CD8-positive, alpha-beta T cell (primary cell): ENCODE measurements at regions of chr15 and their contacts with region 1.

Region 1: GRCh38 chr15:75201609-75202250 is at the start of gene C15orf39:
- DNase-seq: peak; percentile 50 to 88 (median 72)
- ATAC-seq: peak; percentile 56
- H3K4me3 ChIP-seq: peak within 1 kb of the TSS; percentile 83 to 88
- H3K4me3 Mint-ChIP-seq: peak within 1 kb of the TSS; percentile 93
- H3K27ac ChIP-seq: peak within 1 kb of the TSS; percentile 82 to 85
- H3K27ac Mint-ChIP-seq: peak within 1 kb of the TSS; percentile 94
- H3K4me1 ChIP-seq: peaks cover 23% of the 10 kb centered on the region
- H3K4me1 Mint-ChIP-seq: peaks cover 47% of the 10 kb centered on the region
- H3K27me3 ChIP-seq: no peaks in the 10 kb centered on the region
- H3K27me3 Mint-ChIP-seq: no peaks in the 10 kb centered on the region
- CTCF ChIP-seq: peak; percentile 92
- total RNA-seq, gene C15orf39: 36.6 to 37.6 TPM

Region 2: GRCh38 chr15:74373731-74374647 is 827.7 kb before region 1 on chr15:
- CTCF ChIA-PET with region 1: no interaction called
- POLR2A ChIA-PET with region 1: interaction called, 3 read pairs
- intact Hi-C with region 1: loop called (anchors 5 to 10 kb)
- DNase-seq: peak; percentile 92 to 97 (median 95)
- ATAC-seq: peak; percentile 96
- H3K4me3 ChIP-seq: peak overlapping the region; percentile 89 to 96
- H3K4me3 Mint-ChIP-seq: peak overlapping the region; percentile 82
- H3K27ac ChIP-seq: peak overlapping the region; percentile 45 to 62
- H3K27ac Mint-ChIP-seq: no peak overlapping the region
- H3K4me1 ChIP-seq: peaks cover 15% of the 10 kb centered on the region
- H3K4me1 Mint-ChIP-seq: peaks cover 16% of the 10 kb centered on the region
- H3K27me3 ChIP-seq: no peaks in the 10 kb centered on the region
- H3K27me3 Mint-ChIP-seq: peaks cover 8% of the 10 kb centered on the region
- CTCF ChIP-seq: peak; percentile 86

Region 3: DNA sequence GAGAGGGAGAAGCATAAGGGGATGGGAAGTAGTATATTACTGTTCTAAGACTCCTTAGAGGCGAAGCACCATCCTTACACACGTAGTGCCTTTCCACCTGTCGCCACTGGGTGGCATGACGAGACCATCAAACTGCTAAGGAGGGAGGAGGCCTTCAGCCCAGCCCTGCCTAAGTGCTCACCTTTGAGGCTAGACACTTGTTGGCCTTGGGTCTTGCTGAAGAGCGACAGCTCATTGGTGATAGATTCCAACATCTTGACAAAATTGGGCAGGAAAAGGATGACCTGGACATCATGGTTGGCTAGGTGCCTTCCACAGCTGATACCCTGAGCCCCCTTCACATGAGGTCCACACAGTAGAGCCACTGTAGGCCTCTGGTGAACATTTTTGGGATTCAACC is 566.5 kb before region 1 on chr15:
- CTCF ChIA-PET with region 1: interaction called, 9 read pairs
- POLR2A ChIA-PET with region 1: no interaction called
- intact Hi-C with region 1: loop called (anchors 1 kb)
- DNase-seq: peak; percentile 53 to 84 (median 73)
- ATAC-seq: peak; percentile 95
- H3K4me3 ChIP-seq: no peak overlapping the region
- H3K4me3 Mint-ChIP-seq: no peak overlapping the region
- H3K27ac ChIP-seq: peak overlapping the region in 1 of 2 experiments; percentile 36
- H3K27ac Mint-ChIP-seq: no peak overlapping the region
- H3K4me1 ChIP-seq: peaks cover 6% of the 10 kb centered on the region
- H3K4me1 Mint-ChIP-seq: peaks cover 5% of the 10 kb centered on the region
- H3K27me3 ChIP-seq: no peaks in the 10 kb centered on the region
- H3K27me3 Mint-ChIP-seq: no peaks in the 10 kb centered on the region
- CTCF ChIP-seq: peak; percentile 82

Region 4: GRCh38 chr15:74906446-74907162 is 295.1 kb before region 1 on chr15 and contains the start of gene FAM219B:
- CTCF ChIA-PET with region 1: interaction called, 3 read pairs
- POLR2A ChIA-PET with region 1: no interaction called
- intact Hi-C with region 1: loop called in 1 of 2 experiments (anchors 10 kb)
- DNase-seq: peak; percentile 30 to 84 (median 71)
- ATAC-seq: peak; percentile 79
- H3K4me3 ChIP-seq: peak within 1 kb of the TSS; percentile 85 to 89
- H3K4me3 Mint-ChIP-seq: peak within 1 kb of the TSS; percentile 94
- H3K27ac ChIP-seq: peak within 1 kb of the TSS; percentile 78 to 82
- H3K27ac Mint-ChIP-seq: peak within 1 kb of the TSS; percentile 95
- H3K4me1 ChIP-seq: peaks cover 28% of the 10 kb centered on the region
- H3K4me1 Mint-ChIP-seq: peaks cover 41% of the 10 kb centered on the region
- H3K27me3 ChIP-seq: no peaks in the 10 kb centered on the region
- H3K27me3 Mint-ChIP-seq: no peaks in the 10 kb centered on the region
- CTCF ChIP-seq: no peak
- total RNA-seq, gene FAM219B: 18.6 to 22.1 TPM

Region 5: GRCh38 chr15:74995241-74995778 is 206.4 kb before region 1 on chr15 and contains the start of gene SCAMP5:
- CTCF ChIA-PET with region 1: no interaction called
- POLR2A ChIA-PET with region 1: no interaction called
- intact Hi-C with region 1: loop called in 1 of 2 experiments (anchors 1 kb)
- DNase-seq: peak; percentile 80 to 95 (median 91)
- ATAC-seq: peak; percentile 100
- H3K4me3 ChIP-seq: peak within 1 kb of the TSS; percentile 49 to 71
- H3K4me3 Mint-ChIP-seq: peak within 1 kb of the TSS; percentile 85
- H3K27ac ChIP-seq: no peak within 1 kb of the TSS
- H3K27ac Mint-ChIP-seq: no peak within 1 kb of the TSS
- H3K4me1 ChIP-seq: peaks cover 17% of the 10 kb centered on the region
- H3K4me1 Mint-ChIP-seq: peaks cover 11% of the 10 kb centered on the region
- H3K27me3 ChIP-seq: peaks cover 9% of the 10 kb centered on the region in 2 experiments
- H3K27me3 Mint-ChIP-seq: peaks cover 38% of the 10 kb centered on the region
- CTCF ChIP-seq: no peak
- total RNA-seq, gene SCAMP5: 0.71 to 0.72 TPM

Region 6: DNA sequence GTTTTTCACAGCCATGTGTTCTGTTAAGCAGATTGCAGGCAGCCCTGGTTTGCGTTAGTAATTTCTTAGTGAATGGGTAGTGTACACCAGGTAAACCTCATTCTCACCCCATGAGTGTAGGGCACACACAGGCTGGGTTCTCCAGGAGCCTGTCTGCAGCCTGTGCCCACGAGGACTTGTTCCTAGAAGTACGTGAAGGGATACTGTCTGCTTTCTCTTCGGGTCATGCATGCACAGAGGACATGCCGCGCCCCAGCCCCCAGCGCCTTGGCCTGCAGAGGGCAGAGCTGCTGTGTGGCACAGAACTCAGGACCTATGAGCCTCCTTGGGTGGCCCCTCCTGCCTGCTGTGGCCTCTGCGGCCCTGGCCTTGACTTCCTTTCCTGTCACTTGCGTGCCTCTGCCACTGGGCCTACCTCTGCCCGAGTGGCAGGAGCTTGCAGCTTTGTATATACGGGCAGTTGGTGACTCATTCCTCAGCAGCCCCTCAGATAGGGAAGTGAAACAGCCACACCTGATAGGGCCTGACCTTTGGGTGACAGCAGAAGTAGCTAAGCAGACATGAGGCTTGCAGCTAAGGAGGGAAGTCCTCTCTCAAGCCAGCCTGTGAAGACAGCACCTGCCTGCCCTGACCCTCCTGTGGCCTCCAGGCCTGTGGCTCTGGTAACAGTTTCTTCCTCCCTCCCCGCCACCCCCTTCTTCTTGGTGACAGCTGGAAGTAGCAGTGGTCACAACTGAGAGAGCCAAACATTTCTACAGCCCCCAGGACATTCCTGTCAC is 158.8 kb before region 1 on chr15:
- CTCF ChIA-PET with region 1: interaction called, 20 read pairs
- POLR2A ChIA-PET with region 1: interaction called, 5 read pairs
- intact Hi-C with region 1: no loop called
- DNase-seq: peak; percentile 22 to 83 (median 57)
- ATAC-seq: peak; percentile 77
- H3K4me3 ChIP-seq: no peak overlapping the region
- H3K4me3 Mint-ChIP-seq: no peak overlapping the region
- H3K27ac ChIP-seq: peak overlapping the region in 1 of 2 experiments; percentile 68
- H3K27ac Mint-ChIP-seq: peak overlapping the region; percentile 14
- H3K4me1 ChIP-seq: peaks cover 4% of the 10 kb centered on the region
- H3K4me1 Mint-ChIP-seq: peaks cover 13% of the 10 kb centered on the region
- H3K27me3 ChIP-seq: no peaks in the 10 kb centered on the region
- H3K27me3 Mint-ChIP-seq: no peaks in the 10 kb centered on the region
- CTCF ChIP-seq: no peak

Region 7: GRCh38 chr15:75229191-75230015 is 27.7 kb after region 1 on chr15:
- CTCF ChIA-PET with region 1: no interaction called
- POLR2A ChIA-PET with region 1: no interaction called
- intact Hi-C with region 1: no loop called
- DNase-seq: no peak
- ATAC-seq: no peak
- H3K4me3 ChIP-seq: no peak overlapping the region
- H3K4me3 Mint-ChIP-seq: no peak overlapping the region
- H3K27ac ChIP-seq: no peak overlapping the region
- H3K27ac Mint-ChIP-seq: no peak overlapping the region
- H3K4me1 ChIP-seq: no peaks in the 10 kb centered on the region
- H3K4me1 Mint-ChIP-seq: no peaks in the 10 kb centered on the region
- H3K27me3 ChIP-seq: no peaks in the 10 kb centered on the region
- H3K27me3 Mint-ChIP-seq: peaks cover 8% of the 10 kb centered on the region
- CTCF ChIP-seq: no peak

Region 8: DNA sequence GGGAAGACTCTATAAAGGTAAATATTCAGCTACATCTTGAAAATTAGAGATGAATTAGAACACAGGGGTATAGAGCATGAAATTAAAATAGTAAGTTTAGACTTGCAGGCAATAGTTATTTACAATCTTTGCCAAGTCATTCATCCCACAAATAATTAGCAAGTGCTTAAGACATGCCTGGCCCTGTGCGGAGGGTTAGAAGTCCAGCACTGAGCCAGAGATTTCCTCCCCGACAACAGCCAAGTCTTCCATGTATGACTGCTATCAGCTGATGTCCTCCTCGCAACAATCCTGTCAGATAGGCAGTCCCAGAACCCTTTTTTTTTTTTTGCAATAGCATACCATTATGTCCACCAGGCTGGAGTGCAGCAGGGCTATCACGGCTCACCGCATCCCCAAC is 235.1 kb after region 1 on chr15:
- CTCF ChIA-PET with region 1: no interaction called
- POLR2A ChIA-PET with region 1: no interaction called
- intact Hi-C with region 1: no loop called
- DNase-seq: no peak
- ATAC-seq: no peak
- H3K4me3 ChIP-seq: no peak overlapping the region
- H3K4me3 Mint-ChIP-seq: no peak overlapping the region
- H3K27ac ChIP-seq: no peak overlapping the region
- H3K27ac Mint-ChIP-seq: peak overlapping the region; percentile 45
- H3K4me1 ChIP-seq: peaks cover 14% of the 10 kb centered on the region
- H3K4me1 Mint-ChIP-seq: peaks cover 60% of the 10 kb centered on the region
- H3K27me3 ChIP-seq: no peaks in the 10 kb centered on the region
- H3K27me3 Mint-ChIP-seq: no peaks in the 10 kb centered on the region
- CTCF ChIP-seq: no peak

Region 9: DNA sequence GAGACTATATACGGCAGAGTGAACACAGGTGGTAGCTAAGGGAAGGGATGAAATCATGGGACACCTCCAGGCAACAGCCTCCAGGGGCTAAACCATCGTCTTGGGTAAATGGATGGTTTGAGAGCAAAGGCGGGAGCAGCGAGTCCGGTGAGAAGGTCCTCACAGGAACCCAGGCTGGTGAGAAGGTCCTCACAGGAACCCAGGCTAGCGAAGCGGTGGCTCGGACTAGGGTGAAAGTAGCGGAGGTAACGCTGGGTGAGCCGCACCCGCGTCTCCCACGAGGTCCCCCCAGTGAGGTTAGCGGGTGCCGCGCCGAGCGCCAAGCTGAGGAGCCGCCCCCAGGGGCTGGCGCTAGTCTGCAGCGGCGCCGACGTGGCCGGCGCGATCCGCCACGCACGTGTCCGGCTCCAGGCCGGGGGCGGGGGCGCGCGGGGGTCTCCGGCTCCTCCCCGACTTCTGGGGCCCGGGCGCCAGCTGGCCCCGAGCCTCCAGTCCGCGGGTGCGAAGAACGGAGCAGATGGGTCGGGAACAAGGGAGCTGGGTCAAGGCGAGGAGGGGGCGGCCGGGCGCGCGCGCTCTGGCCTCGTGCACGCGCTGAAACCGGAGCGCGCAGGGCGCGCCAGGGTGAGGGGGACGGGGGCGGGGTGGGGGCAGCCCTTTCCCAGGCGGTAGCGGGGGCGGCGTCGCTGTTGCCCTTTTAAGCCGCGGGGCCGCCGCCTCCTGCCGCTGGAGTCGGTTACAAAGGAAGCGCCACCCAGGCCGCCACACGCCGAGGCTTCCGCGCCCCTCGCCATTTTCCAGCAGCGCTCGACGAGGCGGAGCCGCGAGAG is 641.2 kb after region 1 on chr15 and contains the start of gene UBE2Q2:
- CTCF ChIA-PET with region 1: no interaction called
- POLR2A ChIA-PET with region 1: no interaction called
- intact Hi-C with region 1: loop called in 1 of 2 experiments (anchors 2 kb)
- DNase-seq: peak; percentile 13 to 86 (median 75)
- ATAC-seq: peak; percentile 62
- H3K4me3 ChIP-seq: peak within 1 kb of the TSS; percentile 72 to 73
- H3K4me3 Mint-ChIP-seq: peak within 1 kb of the TSS; percentile 90
- H3K27ac ChIP-seq: peak within 1 kb of the TSS; percentile 58 to 59
- H3K27ac Mint-ChIP-seq: peak within 1 kb of the TSS; percentile 93
- H3K4me1 ChIP-seq: peaks cover 26% of the 10 kb centered on the region
- H3K4me1 Mint-ChIP-seq: peaks cover 45% of the 10 kb centered on the region
- H3K27me3 ChIP-seq: no peaks in the 10 kb centered on the region
- H3K27me3 Mint-ChIP-seq: no peaks in the 10 kb centered on the region
- CTCF ChIP-seq: no peak
- total RNA-seq, gene UBE2Q2: 28.5 to 30.4 TPM